MCF 10A (cell line): ENCODE measurements at regions of chr18 and their contacts with region 1.

Region 1: GRCh38 chr18:76492669-76493212 is 2.3 kb downstream of the ZNF516 start:
- DNase-seq: peak; percentile 98
- H3K4me3 Mint-ChIP-seq: peak overlapping the region; percentile 73
- H3K27ac Mint-ChIP-seq: peak overlapping the region; percentile 66
- H3K4me1 Mint-ChIP-seq: peaks cover 17% of the 10 kb centered on the region
- H3K27me3 Mint-ChIP-seq: no peaks in the 10 kb centered on the region
- CTCF ChIP-seq: no peak

Region 2: GRCh38 chr18:75962036-75962572 is 530.6 kb before region 1 on chr18:
- CTCF ChIA-PET with region 1: no interaction called
- POLR2A ChIA-PET with region 1: no interaction called
- intact Hi-C with region 1: no loop called
- DNase-seq: no peak
- H3K4me3 Mint-ChIP-seq: no peak overlapping the region
- H3K27ac Mint-ChIP-seq: no peak overlapping the region
- H3K4me1 Mint-ChIP-seq: no peaks in the 10 kb centered on the region
- H3K27me3 Mint-ChIP-seq: no peaks in the 10 kb centered on the region
- CTCF ChIP-seq: no peak

Region 3: GRCh38 chr18:76209597-76209996 is 283.1 kb before region 1 on chr18:
- CTCF ChIA-PET with region 1: no interaction called
- POLR2A ChIA-PET with region 1: no interaction called
- intact Hi-C with region 1: no loop called
- DNase-seq: peak; percentile 43
- H3K4me3 Mint-ChIP-seq: no peak overlapping the region
- H3K27ac Mint-ChIP-seq: peak overlapping the region; percentile 1
- H3K4me1 Mint-ChIP-seq: peaks cover 9% of the 10 kb centered on the region
- H3K27me3 Mint-ChIP-seq: no peaks in the 10 kb centered on the region
- CTCF ChIP-seq: no peak

Region 4: DNA sequence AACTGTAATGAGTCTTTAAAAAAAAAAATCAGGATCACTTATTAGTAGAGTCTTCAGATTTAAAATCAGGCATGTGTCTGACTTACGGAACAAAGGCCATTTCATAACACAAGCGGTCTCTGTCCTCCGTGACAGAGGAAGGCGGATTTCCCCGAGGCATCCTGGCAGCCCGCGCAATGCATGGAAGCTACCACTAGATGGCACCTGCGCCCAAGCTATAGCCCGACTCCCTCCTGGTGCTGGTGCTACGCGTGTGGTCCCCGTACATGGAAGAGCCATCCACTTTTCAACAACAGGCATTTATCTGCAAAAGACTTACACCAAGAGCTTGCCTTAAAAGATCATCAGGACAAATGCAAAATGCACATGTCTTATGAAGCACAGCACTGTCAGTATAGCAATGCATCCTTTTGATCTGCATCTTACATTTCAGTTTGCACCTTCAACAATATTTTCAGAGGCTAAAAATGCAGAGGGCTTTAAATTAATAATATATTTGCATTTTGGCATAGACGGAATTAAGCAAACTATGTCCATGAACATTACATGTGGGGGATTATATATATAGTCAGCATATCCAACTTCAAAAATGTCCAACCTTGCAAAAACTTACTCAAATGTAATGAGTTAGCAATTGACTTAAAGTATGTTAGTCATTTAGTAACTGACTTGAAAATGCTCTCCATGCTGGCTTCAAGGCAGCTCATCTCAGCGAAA is 93.7 kb before region 1 on chr18:
- CTCF ChIA-PET with region 1: interaction called, 6 read pairs
- POLR2A ChIA-PET with region 1: interaction called, 3 read pairs
- intact Hi-C with region 1: loop called (anchors 2 kb)
- DNase-seq: peak; percentile 76
- H3K4me3 Mint-ChIP-seq: no peak overlapping the region
- H3K27ac Mint-ChIP-seq: no peak overlapping the region
- H3K4me1 Mint-ChIP-seq: peaks cover 12% of the 10 kb centered on the region
- H3K27me3 Mint-ChIP-seq: no peaks in the 10 kb centered on the region
- CTCF ChIP-seq: peak; percentile 91

Region 5: GRCh38 chr18:76459687-76460350 is 32.9 kb before region 1 on chr18:
- CTCF ChIA-PET with region 1: interaction called, 5 read pairs
- POLR2A ChIA-PET with region 1: interaction called, 7 read pairs
- intact Hi-C with region 1: loop called (anchors 2 kb)
- DNase-seq: peak; percentile 98
- H3K4me3 Mint-ChIP-seq: peak overlapping the region; percentile 61
- H3K27ac Mint-ChIP-seq: peak overlapping the region; percentile 65
- H3K4me1 Mint-ChIP-seq: peaks cover 22% of the 10 kb centered on the region
- H3K27me3 Mint-ChIP-seq: no peaks in the 10 kb centered on the region
- CTCF ChIP-seq: no peak

Region 6: GRCh38 chr18:76553715-76554546 is 61.2 kb after region 1 on chr18:
- CTCF ChIA-PET with region 1: interaction called, 3 read pairs
- POLR2A ChIA-PET with region 1: interaction called, 14 read pairs
- intact Hi-C with region 1: no loop called
- DNase-seq: peak; percentile 85
- H3K4me3 Mint-ChIP-seq: no peak overlapping the region
- H3K27ac Mint-ChIP-seq: no peak overlapping the region
- H3K4me1 Mint-ChIP-seq: peaks cover 20% of the 10 kb centered on the region
- H3K27me3 Mint-ChIP-seq: no peaks in the 10 kb centered on the region
- CTCF ChIP-seq: no peak

Region 7: DNA sequence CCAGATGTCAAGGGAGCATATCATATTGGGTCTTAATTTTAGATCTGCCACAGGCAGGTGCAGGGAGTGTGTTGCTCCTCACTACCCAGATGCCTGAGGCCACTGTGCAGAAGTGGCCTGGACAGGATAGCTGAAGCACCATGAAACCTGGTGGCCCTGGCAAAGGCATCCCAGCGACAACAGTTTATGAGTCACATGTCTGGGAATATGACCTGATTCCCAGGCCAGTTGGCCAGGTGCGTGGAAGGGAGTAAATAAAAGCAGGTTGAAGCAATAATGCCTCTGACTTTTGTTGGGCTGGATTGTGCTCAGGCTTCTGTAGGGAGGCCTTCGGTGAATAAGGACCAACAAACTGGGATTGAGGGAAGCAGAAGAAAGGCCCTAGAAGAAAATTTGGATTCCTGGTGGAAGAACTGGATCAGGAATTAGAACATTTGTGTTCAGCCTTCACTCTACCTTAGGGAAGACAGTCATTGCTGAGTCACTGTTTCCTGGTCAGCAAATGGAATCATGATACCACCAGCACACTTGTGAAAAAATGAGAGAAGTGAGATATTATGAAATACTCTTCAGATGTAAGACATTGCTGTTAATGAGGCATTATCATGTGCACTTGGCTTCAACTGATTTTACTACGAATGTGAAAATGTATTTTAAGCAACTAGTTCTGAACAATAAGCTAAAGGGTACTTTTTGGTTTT is 80.7 kb after region 1 on chr18:
- CTCF ChIA-PET with region 1: no interaction called
- POLR2A ChIA-PET with region 1: interaction called, 13 read pairs
- intact Hi-C with region 1: no loop called
- DNase-seq: peak; percentile 86
- H3K4me3 Mint-ChIP-seq: no peak overlapping the region
- H3K27ac Mint-ChIP-seq: peak overlapping the region; percentile 86
- H3K4me1 Mint-ChIP-seq: peaks cover 21% of the 10 kb centered on the region
- H3K27me3 Mint-ChIP-seq: no peaks in the 10 kb centered on the region
- CTCF ChIP-seq: no peak

Region 8: DNA sequence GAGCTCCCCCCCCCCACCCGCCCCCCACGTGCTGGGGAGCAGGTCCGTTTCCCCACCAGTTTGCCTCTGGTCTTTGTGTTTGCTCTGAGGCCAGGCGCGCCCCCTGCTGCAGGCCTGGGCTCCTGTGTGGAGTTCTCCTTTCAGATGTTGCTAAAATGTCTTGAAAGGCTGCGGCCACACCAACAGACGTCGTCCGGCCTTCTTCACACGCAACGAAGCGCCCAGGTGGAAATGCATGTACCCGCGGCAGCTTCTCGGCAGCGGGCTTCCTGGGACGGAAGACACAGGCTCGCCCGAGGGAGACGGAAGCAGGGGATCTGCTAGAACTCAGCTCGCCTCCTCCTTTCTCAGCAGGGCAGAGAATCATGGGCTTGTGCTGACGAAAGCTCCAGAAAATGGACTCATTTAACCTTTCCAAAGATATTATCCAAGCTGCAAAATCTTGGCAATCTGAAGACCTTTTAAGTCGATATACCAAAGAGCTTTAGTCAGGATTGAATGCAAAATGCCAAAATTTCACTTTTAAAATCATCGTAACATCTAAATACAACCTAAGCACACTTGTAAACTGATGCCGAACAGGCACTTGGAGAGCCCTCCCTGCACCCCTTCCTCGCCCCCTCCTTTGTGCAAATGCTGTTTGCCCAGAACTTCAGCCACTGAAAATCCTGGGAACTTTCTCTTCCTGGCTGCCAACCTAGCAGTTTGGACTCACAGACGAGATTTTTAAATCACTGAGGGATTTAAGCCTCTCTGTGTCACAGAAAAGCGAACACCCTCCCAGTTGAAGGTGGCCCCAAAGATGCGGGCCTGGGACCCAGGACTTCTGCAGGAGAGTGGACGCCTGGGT is 127.8 kb after region 1 on chr18:
- CTCF ChIA-PET with region 1: interaction called, 8 read pairs
- POLR2A ChIA-PET with region 1: interaction called, 63 read pairs
- intact Hi-C with region 1: loop called (anchors 1 kb)
- DNase-seq: peak; percentile 81
- H3K4me3 Mint-ChIP-seq: peak overlapping the region; percentile 62
- H3K27ac Mint-ChIP-seq: peak overlapping the region; percentile 94
- H3K4me1 Mint-ChIP-seq: peaks cover 29% of the 10 kb centered on the region
- H3K27me3 Mint-ChIP-seq: no peaks in the 10 kb centered on the region
- CTCF ChIP-seq: peak; percentile 70